ENCODE measurements at regions of chr12 and their contacts with region 1.

Region 1: GRCh38 chr12:96347130-96347699 is 53.0 kb downstream of the CDK17 start:
- DNase-seq: no peak
- H3K4me3 ChIP-seq: no peak overlapping the region
- H3K27ac ChIP-seq: no peak overlapping the region
- H3K4me1 ChIP-seq: peaks cover 41% of the 10 kb centered on the region
- H3K27me3 ChIP-seq: no peaks in the 10 kb centered on the region
- CTCF ChIP-seq: no peak
- POLR2A ChIP-seq: no peak

Region 2: DNA sequence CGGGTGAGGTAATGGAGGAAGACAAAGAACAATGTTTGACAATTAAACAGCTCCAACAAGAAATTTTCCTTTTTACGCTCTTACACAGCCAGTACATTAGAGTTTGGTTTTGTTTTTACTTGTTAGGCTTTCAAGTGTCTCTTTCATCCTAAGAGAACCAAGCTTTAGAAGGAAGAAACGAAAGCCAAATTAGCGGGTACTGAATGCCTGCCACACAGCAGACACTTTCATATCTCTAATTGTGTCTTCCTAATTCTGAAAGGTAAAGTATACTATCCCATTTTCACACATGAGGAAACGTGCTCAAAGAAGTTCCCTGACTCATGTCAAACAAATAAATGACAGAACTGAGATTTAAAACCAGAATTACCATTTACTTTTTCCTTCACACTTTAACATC is 11.9 kb before region 1 on chr12:
- CTCF ChIA-PET with region 1: interaction called, 21 read pairs
- POLR2A ChIA-PET with region 1: no interaction called
- dilution Hi-C with region 1: no loop called
- intact Hi-C with region 1: no loop called
- DNase-seq: peak; percentile 39
- H3K4me3 ChIP-seq: no peak overlapping the region
- H3K27ac ChIP-seq: no peak overlapping the region
- H3K4me1 ChIP-seq: peaks cover 30% of the 10 kb centered on the region
- H3K27me3 ChIP-seq: no peaks in the 10 kb centered on the region
- CTCF ChIP-seq: no peak
- POLR2A ChIP-seq: no peak

Measured in endothelial cell of umbilical vein (primary cell).